Thyroid gland (tissue), 4 donors: ENCODE measurements at regions of chr19 and their contacts with region 1.

Region 1: DNA sequence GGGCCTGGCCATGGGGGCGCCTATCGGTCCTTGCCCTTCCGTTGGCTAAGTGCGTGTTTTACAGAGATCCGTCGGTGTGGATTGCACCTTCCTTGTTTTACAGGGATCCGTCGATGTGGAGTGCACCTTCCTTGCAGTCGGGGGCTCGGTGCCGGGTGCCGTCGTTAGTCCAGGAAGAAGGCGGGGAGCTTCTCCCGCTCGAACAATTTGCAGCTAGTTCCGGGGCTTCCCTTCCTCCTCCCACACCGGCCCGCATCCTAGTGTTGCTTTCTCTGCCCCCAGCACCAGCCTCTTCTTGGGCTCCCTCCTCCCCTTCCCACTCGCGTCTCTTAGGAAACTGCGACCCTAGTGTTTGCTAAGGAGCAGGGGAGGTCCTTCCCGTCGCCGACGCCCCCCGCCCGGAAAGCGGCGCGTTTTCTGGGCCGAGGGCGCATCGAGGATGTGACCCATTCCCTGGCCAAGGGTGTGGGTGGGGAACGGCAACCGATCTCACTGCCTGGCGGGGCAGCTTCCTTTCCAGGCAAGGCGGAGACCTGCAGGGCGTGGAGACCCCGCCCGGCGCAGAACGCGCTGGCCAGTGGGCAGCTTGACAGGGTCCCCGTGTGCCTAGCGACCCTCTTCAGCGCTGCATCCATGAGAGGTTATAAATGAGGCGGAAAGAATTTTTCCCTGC is 75.7 kb upstream of the ZNF91 start:
- DNase-seq: no peak
- H3K4me3 ChIP-seq: no peak overlapping the region
- H3K27ac ChIP-seq: no peak overlapping the region
- H3K4me1 ChIP-seq: no peaks in the 10 kb centered on the region
- H3K27me3 ChIP-seq: no peaks in the 10 kb centered on the region
- CTCF ChIP-seq: no peak
- POLR2A ChIP-seq: no peak

Region 2: GRCh38 chr19:23321948-23322549 is 149.0 kb before region 1 on chr19:
- intact Hi-C with region 1: loop called (anchors 2 kb)
- DNase-seq: no peak
- H3K4me3 ChIP-seq: no peak overlapping the region
- H3K27ac ChIP-seq: no peak overlapping the region
- H3K4me1 ChIP-seq: no peaks in the 10 kb centered on the region
- H3K27me3 ChIP-seq: no peaks in the 10 kb centered on the region
- CTCF ChIP-seq: no peak
- POLR2A ChIP-seq: no peak